CD4-positive, alpha-beta T cell (primary cell): ENCODE measurements at regions of chr20 and their contacts with region 1.

Region 1: GRCh38 chr20:32779500-32780211 is 17.5 kb downstream of the DNMT3B start:
- DNase-seq: no peak
- ATAC-seq: no peak
- H3K4me3 ChIP-seq: no peak overlapping the region
- H3K4me3 Mint-ChIP-seq: no peak overlapping the region
- H3K27ac ChIP-seq: no peak overlapping the region
- H3K27ac Mint-ChIP-seq: no peak overlapping the region
- H3K4me1 ChIP-seq: peaks cover 5% of the 10 kb centered on the region
- H3K4me1 Mint-ChIP-seq: peaks cover 6% of the 10 kb centered on the region
- H3K27me3 ChIP-seq: no peaks in the 10 kb centered on the region
- H3K27me3 Mint-ChIP-seq: no peaks in the 10 kb centered on the region
- CTCF ChIP-seq: no peak

Region 2: GRCh38 chr20:32316667-32317066 is 463.0 kb before region 1 on chr20:
- CTCF ChIA-PET with region 1: no interaction called
- POLR2A ChIA-PET with region 1: no interaction called
- intact Hi-C with region 1: no loop called
- DNase-seq: no peak
- ATAC-seq: no peak
- H3K4me3 ChIP-seq: no peak overlapping the region
- H3K4me3 Mint-ChIP-seq: no peak overlapping the region
- H3K27ac ChIP-seq: no peak overlapping the region
- H3K27ac Mint-ChIP-seq: no peak overlapping the region
- H3K4me1 ChIP-seq: no peaks in the 10 kb centered on the region
- H3K4me1 Mint-ChIP-seq: no peaks in the 10 kb centered on the region
- H3K27me3 ChIP-seq: no peaks in the 10 kb centered on the region
- H3K27me3 Mint-ChIP-seq: no peaks in the 10 kb centered on the region
- CTCF ChIP-seq: no peak

Region 3: DNA sequence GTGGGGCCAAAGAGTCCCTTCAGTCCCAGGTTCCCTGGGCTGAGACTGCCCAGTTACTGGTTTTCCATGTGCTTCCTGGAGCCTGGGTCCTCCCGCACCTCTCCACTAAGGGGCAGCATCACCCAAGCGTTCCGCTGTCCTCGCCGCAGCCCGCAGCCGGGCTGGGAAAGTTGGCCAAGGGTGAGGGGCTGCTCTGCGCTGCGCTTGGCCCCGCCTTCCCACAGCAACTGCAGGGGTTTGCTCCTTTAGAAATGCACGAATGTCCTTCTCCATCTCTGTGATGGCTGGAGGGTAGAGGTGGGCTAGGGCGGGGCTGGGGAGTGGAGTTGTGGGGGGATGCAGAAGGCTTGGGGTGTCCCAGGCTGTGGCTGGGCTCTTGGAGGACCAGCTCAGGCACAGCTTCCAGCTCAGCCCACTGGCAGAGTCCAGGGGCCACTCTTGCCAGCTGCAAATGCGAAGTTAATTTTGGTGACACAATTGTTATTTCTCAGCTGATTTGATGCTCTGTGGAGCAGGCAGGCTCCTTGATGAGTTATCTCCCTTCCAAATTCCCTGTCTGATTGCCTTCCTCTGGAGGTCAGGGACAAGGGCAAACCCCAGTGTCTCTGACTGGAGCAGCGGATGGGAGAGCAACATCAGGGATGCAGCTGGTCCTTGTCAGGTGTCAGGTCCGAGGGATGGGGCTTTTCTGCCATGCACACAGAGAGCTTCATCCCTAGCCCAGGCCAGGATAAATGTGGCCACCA is 257.7 kb before region 1 on chr20:
- CTCF ChIA-PET with region 1: interaction called, 5 read pairs
- POLR2A ChIA-PET with region 1: no interaction called
- intact Hi-C with region 1: loop called in 1 of 2 experiments (anchors 10 kb)
- DNase-seq: peak; percentile 52 to 86 (median 65)
- ATAC-seq: peak; percentile 85
- H3K4me3 ChIP-seq: peak overlapping the region; percentile 5
- H3K4me3 Mint-ChIP-seq: peak overlapping the region; percentile 35
- H3K27ac ChIP-seq: peak overlapping the region; percentile 55 to 69
- H3K27ac Mint-ChIP-seq: peak overlapping the region; percentile 99
- H3K4me1 ChIP-seq: peaks cover 72% of the 10 kb centered on the region
- H3K4me1 Mint-ChIP-seq: peaks cover 61% of the 10 kb centered on the region
- H3K27me3 ChIP-seq: no peaks in the 10 kb centered on the region
- H3K27me3 Mint-ChIP-seq: no peaks in the 10 kb centered on the region
- CTCF ChIP-seq: peak; percentile 85

Region 4: GRCh38 chr20:32674362-32674789 is 105.3 kb before region 1 on chr20:
- CTCF ChIA-PET with region 1: interaction called, 75 read pairs
- POLR2A ChIA-PET with region 1: interaction called, 12 read pairs
- intact Hi-C with region 1: loop called (anchors 1 kb)
- DNase-seq: peak; percentile 53 to 84 (median 71)
- ATAC-seq: peak; percentile 78
- H3K4me3 ChIP-seq: no peak overlapping the region
- H3K4me3 Mint-ChIP-seq: no peak overlapping the region
- H3K27ac ChIP-seq: no peak overlapping the region
- H3K27ac Mint-ChIP-seq: no peak overlapping the region
- H3K4me1 ChIP-seq: peaks cover 24% of the 10 kb centered on the region
- H3K4me1 Mint-ChIP-seq: peaks cover 21% of the 10 kb centered on the region
- H3K27me3 ChIP-seq: no peaks in the 10 kb centered on the region
- H3K27me3 Mint-ChIP-seq: no peaks in the 10 kb centered on the region
- CTCF ChIP-seq: peak; percentile 78

Region 5: DNA sequence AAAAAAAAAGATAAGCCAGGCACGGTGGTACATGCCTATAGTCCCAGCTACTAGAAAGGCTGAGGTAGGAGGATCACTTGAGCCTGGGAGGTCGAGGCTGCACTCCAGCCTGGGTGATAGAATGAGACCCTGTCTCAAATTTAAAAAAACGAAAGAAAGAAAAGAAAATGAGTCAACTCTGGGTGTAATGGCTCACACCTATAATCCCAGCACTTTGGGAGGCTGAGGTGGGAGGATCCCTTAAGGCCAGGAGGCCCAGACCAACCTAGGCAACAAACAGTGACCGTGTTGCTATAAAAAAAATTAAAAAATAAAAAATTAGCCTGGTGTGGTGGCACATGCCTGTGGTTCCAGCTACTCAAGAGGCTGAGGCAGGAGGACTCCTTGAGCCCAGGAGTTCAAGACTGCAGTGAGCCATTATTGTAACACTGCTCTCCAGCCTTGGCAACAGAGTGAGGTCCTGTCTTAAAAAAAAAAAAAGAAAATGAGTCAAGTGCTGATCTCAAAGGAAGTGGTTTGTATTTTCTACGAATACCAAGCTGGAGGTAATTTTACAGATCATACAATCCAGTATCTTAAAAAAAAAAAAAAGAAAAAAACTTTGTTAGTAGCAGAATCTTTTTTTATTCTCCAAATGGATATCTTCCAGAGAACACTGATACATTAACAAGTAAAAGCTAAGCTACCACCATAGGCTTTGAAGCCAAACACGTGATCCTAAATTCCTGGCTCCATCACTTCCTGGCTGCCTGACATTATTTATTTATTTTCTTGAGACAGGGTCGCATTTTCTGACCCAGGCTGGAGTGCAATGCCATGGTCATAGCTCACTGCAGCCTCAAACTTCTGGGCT is 42.1 kb before region 1 on chr20:
- CTCF ChIA-PET with region 1: interaction called, 18 read pairs
- POLR2A ChIA-PET with region 1: no interaction called
- intact Hi-C with region 1: loop called in 1 of 2 experiments (anchors 5 kb)
- DNase-seq: peak in 9 of 14 experiments; percentile 13 to 80 (median 28)
- ATAC-seq: peak; percentile 91
- H3K4me3 ChIP-seq: no peak overlapping the region
- H3K4me3 Mint-ChIP-seq: peak overlapping the region; percentile 74
- H3K27ac ChIP-seq: peak overlapping the region; percentile 42 to 68
- H3K27ac Mint-ChIP-seq: peak overlapping the region; percentile 93
- H3K4me1 ChIP-seq: peaks cover 59% of the 10 kb centered on the region
- H3K4me1 Mint-ChIP-seq: peaks cover 54% of the 10 kb centered on the region
- H3K27me3 ChIP-seq: no peaks in the 10 kb centered on the region
- H3K27me3 Mint-ChIP-seq: no peaks in the 10 kb centered on the region
- CTCF ChIP-seq: no peak

Region 6: DNA sequence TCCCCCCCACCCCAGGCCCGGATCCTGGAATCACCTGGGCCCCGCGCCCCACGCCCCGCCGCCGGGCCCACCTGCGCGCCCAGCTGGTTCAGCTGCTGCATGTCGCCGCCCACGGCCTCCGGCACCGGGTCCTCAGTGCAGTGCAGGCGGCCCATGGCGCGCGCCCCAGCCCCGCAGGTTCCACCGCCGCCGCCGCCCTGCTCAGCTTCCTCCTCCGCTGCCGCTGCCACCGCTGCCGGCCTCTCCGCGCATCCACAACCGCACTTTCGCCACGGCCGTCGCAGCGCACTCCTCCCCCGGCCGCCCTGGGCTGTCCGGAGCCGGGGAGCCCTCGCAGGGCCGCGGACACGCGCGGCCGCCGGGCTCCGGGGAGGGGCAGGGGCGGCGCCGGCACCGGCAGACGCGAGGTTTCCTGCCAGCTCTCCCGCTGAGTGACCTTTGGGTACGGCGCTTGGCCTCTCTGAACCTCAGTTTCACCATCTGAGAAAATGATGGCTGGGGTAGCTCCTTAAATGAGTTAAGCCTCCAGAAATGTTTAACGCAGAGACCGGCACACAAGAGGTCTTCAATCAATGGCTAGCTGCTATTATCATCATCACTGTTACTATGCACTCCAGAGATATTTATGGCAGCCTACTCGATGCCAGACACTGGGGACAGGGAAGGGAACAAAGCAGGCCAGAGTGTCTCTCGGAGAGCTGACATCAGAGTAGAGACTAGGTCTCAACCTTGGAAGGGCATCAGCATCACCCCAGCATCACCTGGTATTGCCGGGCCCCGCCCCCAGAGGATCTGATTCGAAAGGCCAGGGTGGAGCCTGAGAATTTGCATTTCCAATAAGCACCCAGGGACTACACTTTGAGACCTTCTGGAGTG is 36.2 kb before region 1 on chr20 and contains the start of gene COMMD7:
- CTCF ChIA-PET with region 1: interaction called, 18 read pairs
- POLR2A ChIA-PET with region 1: interaction called, 4 read pairs
- intact Hi-C with region 1: loop called in 1 of 2 experiments (anchors 5 kb)
- DNase-seq: peak; percentile 45 to 83 (median 58)
- ATAC-seq: peak; percentile 75
- H3K4me3 ChIP-seq: peak within 1 kb of the TSS; percentile 88
- H3K4me3 Mint-ChIP-seq: peak within 1 kb of the TSS; percentile 94
- H3K27ac ChIP-seq: peak within 1 kb of the TSS; percentile 85 to 91
- H3K27ac Mint-ChIP-seq: peak within 1 kb of the TSS; percentile 96
- H3K4me1 ChIP-seq: peaks cover 38% of the 10 kb centered on the region
- H3K4me1 Mint-ChIP-seq: peaks cover 41% of the 10 kb centered on the region
- H3K27me3 ChIP-seq: no peaks in the 10 kb centered on the region
- H3K27me3 Mint-ChIP-seq: no peaks in the 10 kb centered on the region
- CTCF ChIP-seq: no peak
- total RNA-seq, gene COMMD7: 30.3 to 30.4 TPM

Region 7: GRCh38 chr20:32762149-32762753 is 17.4 kb before region 1 on chr20 and contains the start of gene DNMT3B:
- CTCF ChIA-PET with region 1: interaction called, 16 read pairs
- POLR2A ChIA-PET with region 1: interaction called, 3 read pairs
- intact Hi-C with region 1: no loop called
- DNase-seq: peak; percentile 31 to 81 (median 66)
- ATAC-seq: peak; percentile 76
- H3K4me3 ChIP-seq: peak within 1 kb of the TSS; percentile 67
- H3K4me3 Mint-ChIP-seq: peak within 1 kb of the TSS; percentile 89
- H3K27ac ChIP-seq: no peak within 1 kb of the TSS
- H3K27ac Mint-ChIP-seq: no peak within 1 kb of the TSS
- H3K4me1 ChIP-seq: peaks cover 20% of the 10 kb centered on the region
- H3K4me1 Mint-ChIP-seq: peaks cover 13% of the 10 kb centered on the region
- H3K27me3 ChIP-seq: no peaks in the 10 kb centered on the region
- H3K27me3 Mint-ChIP-seq: no peaks in the 10 kb centered on the region
- CTCF ChIP-seq: no peak
- total RNA-seq, gene DNMT3B: 0.28 to 0.33 TPM

Region 8: GRCh38 chr20:32807706-32808105 is 28.1 kb after region 1 on chr20:
- CTCF ChIA-PET with region 1: no interaction called
- POLR2A ChIA-PET with region 1: no interaction called
- intact Hi-C with region 1: no loop called
- DNase-seq: no peak
- ATAC-seq: no peak
- H3K4me3 ChIP-seq: no peak overlapping the region
- H3K4me3 Mint-ChIP-seq: no peak overlapping the region
- H3K27ac ChIP-seq: no peak overlapping the region
- H3K27ac Mint-ChIP-seq: no peak overlapping the region
- H3K4me1 ChIP-seq: no peaks in the 10 kb centered on the region
- H3K4me1 Mint-ChIP-seq: peaks cover 4% of the 10 kb centered on the region
- H3K27me3 ChIP-seq: no peaks in the 10 kb centered on the region
- H3K27me3 Mint-ChIP-seq: no peaks in the 10 kb centered on the region
- CTCF ChIP-seq: no peak